MCF 10A (cell line): ENCODE measurements at regions of chr2 and their contacts with region 1.

Region 1: DNA sequence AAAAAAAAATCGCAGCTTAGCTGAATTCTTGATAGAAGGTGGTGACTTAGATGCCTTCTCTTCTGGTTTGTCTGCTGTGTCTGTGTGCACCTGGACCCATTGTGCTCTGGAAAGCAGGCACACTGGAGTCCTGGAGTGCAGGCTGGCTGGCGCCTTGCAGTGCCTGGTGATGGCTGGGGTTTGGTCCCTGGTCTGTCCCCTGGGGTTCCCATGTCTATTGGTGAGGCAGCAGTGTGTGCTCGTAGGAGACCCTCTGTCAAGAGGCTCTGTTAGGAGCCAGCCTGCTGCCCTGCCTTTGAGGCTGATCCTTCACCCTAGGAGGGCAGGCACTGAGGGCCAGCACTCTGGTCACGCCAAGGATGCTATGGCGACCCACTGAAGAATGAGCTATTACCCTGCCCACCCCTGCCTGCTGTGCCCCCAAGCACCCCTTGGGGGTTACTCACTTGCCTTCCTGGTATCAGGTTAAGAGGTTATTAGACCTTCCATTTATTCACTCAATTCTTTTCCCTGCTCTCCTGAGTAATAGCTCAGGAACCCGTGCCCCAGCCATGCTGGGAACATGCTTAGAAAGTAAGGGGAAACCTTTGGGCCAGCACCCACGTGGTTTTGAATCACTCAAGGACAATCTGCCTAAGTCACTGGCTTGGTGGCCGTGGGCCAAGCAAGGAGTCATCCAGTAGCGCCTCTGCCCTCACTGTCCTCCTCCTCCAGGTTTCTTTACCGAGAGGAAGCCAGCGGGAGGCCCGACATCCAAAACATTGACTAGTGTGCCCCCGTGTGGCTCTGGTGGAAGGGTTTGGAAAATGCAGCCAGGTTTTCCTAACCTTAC is 284.5 kb downstream of the PRKCE start:
- DNase-seq: peak; percentile 99
- H3K4me3 Mint-ChIP-seq: no peak overlapping the region
- H3K27ac Mint-ChIP-seq: peak overlapping the region; percentile 29
- H3K4me1 Mint-ChIP-seq: peaks cover 39% of the 10 kb centered on the region
- H3K27me3 Mint-ChIP-seq: no peaks in the 10 kb centered on the region
- CTCF ChIP-seq: peak; percentile 88

Region 2: DNA sequence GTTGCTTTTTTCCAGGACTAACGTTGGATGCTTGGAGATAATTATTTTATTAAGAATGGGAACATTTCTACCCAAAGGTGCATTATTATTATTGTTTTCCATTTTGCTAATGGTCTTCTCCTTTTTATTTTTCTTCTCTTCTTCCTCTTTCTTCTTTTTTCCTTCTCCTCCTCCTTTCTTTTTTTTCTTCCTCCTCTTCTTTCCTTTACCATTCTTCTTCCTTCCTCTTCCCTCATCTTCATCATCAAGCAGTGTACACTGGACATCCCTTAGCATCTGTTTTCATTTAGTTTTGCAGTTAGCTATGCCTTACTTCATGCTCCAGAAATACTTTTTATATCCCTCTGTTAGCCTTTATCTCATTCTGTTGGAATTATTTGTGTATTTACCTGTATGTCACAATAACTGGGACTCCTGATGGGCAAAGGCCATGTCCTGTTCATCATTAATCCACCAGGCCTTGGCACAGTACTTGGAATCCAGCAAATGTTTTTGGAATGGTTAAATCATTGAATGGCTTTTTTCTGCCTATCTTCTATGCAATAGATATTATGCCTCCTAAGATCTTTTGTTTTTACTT is 1411.6 kb before region 1 on chr2:
- CTCF ChIA-PET with region 1: no interaction called
- POLR2A ChIA-PET with region 1: no interaction called
- intact Hi-C with region 1: no loop called
- DNase-seq: no peak
- H3K4me3 Mint-ChIP-seq: no peak overlapping the region
- H3K27ac Mint-ChIP-seq: no peak overlapping the region
- H3K4me1 Mint-ChIP-seq: peaks cover 18% of the 10 kb centered on the region
- H3K27me3 Mint-ChIP-seq: no peaks in the 10 kb centered on the region
- CTCF ChIP-seq: no peak

Region 3: DNA sequence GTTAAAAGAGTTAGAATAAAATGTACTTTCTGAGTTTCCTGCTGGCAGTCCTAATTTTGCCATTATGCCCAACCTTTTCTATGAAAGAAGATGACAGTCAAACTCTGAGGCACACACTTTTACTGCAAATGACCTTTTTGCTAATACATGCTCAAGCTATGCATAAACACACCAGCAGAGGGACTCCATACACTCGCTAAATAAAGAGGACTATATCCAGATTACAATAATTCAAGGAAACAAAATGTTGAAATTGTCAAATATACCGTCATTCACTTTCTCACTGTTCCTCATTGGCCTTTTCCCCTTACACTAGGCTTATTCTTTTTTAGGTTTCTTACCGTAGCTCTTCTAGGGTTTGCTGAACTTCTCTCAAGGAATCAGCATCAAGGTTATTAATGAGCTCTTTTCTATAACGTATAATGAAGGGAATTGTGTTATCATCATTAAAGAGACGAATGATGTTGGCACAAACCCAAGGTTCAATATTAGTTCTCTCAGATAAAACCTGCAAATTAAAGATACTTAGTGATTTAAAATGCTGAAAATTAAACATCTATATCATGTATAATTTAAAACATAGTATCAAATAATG is 350.6 kb before region 1 on chr2:
- CTCF ChIA-PET with region 1: interaction called, 8 read pairs
- POLR2A ChIA-PET with region 1: interaction called, 3 read pairs
- intact Hi-C with region 1: loop called (anchors 1 kb)
- DNase-seq: peak; percentile 59
- H3K4me3 Mint-ChIP-seq: no peak overlapping the region
- H3K27ac Mint-ChIP-seq: no peak overlapping the region
- H3K4me1 Mint-ChIP-seq: peaks cover 7% of the 10 kb centered on the region
- H3K27me3 Mint-ChIP-seq: no peaks in the 10 kb centered on the region
- CTCF ChIP-seq: peak; percentile 54

Region 4: DNA sequence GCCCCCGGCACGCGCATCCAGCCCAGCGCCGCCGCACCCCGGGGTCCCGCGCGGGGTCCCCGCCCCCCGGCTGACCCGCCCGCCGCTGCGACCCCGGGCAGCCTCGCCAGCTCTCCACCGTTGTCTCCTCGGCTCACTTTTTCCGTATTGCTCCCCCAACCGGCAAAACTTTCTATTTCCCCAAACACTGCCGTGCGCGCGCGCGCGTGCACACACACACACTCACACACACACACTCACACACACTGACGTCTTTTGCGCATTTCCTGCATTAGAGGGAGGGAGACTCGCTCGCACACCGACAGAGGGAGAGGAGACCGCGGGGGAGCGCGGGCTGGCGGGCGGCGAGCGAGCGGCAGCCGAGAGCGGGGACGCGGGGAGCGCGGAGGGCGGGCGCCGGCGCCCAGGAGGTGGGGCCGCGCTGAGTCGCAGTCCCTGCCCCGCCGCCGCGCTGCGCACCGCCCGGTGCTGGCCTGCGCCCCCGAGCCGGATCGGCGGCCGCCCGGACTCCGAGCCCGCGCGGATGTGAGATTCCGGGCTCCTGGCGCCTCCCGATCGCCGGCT is 285.1 kb before region 1 on chr2:
- CTCF ChIA-PET with region 1: interaction called, 26 read pairs
- POLR2A ChIA-PET with region 1: interaction called, 24 read pairs
- intact Hi-C with region 1: loop called (anchors 1 kb)
- DNase-seq: peak; percentile 95
- H3K4me3 Mint-ChIP-seq: peak overlapping the region; percentile 79
- H3K27ac Mint-ChIP-seq: peak overlapping the region; percentile 73
- H3K4me1 Mint-ChIP-seq: peaks cover 16% of the 10 kb centered on the region
- H3K27me3 Mint-ChIP-seq: no peaks in the 10 kb centered on the region
- CTCF ChIP-seq: peak; percentile 8

Region 5: DNA sequence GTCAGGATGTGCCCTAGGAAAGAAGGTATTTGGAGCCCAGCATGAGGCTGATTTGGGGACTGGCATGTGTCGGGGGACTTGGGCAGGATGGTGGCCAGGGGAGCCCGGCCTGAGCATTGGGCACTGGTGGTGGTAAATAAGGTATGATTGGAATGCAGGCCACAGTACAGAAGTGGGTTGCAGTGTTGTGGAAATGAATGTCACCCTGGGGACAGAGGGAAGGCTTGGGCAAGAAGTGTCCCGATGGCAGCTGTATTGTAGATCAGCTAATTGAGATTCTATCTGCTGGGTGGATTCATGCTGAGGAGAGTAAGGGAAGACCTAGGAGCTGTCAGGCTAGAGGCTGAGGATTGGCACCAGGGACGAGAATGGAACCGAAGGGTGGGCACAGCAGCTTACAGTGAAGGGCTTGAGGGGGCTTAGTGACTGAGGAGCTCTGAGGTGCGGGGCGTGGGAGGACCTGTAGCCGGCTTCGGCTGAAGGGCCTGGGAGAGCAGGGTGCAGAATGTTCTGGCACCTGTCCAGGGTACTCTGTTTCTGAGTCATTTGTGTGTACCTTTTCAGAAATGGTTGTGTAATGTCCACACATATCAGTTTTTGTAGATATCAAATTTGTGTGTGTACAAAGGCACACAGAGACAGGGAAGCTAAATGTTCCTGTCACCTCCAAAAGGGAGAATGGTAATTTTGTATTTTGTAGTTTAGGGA is 114.3 kb before region 1 on chr2:
- CTCF ChIA-PET with region 1: interaction called, 5 read pairs
- POLR2A ChIA-PET with region 1: interaction called, 31 read pairs
- intact Hi-C with region 1: loop called (anchors 2 kb)
- DNase-seq: peak; percentile 93
- H3K4me3 Mint-ChIP-seq: peak overlapping the region; percentile 50
- H3K27ac Mint-ChIP-seq: peak overlapping the region; percentile 49
- H3K4me1 Mint-ChIP-seq: peaks cover 77% of the 10 kb centered on the region
- H3K27me3 Mint-ChIP-seq: no peaks in the 10 kb centered on the region
- CTCF ChIP-seq: no peak

Region 6: DNA sequence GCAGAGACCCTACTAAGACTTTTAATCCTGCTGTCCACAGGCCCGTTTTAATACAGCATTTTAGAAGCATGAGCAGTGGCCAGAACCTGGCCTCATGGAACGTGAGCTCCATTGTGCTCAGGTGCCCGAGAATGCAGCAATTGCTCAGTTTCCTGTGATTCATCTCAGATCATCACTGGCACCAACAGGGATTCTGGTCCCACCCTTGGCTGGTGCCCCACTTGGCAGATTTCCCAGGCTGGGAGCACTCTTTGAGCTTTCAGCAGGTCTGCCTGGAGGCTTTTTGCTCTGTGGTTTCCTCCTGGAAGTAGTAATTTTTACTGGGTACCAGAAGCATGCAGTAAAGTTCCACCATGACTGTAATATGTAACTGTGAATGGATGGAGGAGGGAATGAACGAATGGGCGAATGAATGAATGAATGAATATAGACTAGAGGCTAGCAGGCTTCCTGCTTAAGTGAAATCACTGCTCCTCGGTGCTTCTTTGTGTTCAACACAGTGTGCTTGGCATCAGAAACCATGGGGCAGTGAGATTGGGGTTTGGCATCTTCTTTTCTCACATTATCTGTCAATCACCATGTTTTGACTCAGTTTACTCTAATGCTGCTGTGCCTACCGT is 28.3 kb after region 1 on chr2:
- CTCF ChIA-PET with region 1: interaction called, 4 read pairs
- POLR2A ChIA-PET with region 1: interaction called, 36 read pairs
- intact Hi-C with region 1: loop called (anchors 1 kb)
- DNase-seq: peak; percentile 100
- H3K4me3 Mint-ChIP-seq: no peak overlapping the region
- H3K27ac Mint-ChIP-seq: peak overlapping the region; percentile 84
- H3K4me1 Mint-ChIP-seq: peaks cover 42% of the 10 kb centered on the region
- H3K27me3 Mint-ChIP-seq: no peaks in the 10 kb centered on the region
- CTCF ChIP-seq: no peak